Vagina (tissue), 2 donors: ENCODE measurements at regions of chr16 and their contacts with region 1.

Region 1: GRCh38 chr16:1610276-1611017 is 1.4 kb downstream of the IFT140 start:
- DNase-seq: peak in 1 of 2 donors; percentile 90
- H3K4me3 ChIP-seq: peak overlapping the region; percentile 93 to 99
- H3K27ac ChIP-seq: peak overlapping the region; percentile 78
- H3K4me1 ChIP-seq: peaks cover 39% of the 10 kb centered on the region
- H3K27me3 ChIP-seq: no peaks in the 10 kb centered on the region
- CTCF ChIP-seq: no peak
- POLR2A ChIP-seq: no peak

Region 2: DNA sequence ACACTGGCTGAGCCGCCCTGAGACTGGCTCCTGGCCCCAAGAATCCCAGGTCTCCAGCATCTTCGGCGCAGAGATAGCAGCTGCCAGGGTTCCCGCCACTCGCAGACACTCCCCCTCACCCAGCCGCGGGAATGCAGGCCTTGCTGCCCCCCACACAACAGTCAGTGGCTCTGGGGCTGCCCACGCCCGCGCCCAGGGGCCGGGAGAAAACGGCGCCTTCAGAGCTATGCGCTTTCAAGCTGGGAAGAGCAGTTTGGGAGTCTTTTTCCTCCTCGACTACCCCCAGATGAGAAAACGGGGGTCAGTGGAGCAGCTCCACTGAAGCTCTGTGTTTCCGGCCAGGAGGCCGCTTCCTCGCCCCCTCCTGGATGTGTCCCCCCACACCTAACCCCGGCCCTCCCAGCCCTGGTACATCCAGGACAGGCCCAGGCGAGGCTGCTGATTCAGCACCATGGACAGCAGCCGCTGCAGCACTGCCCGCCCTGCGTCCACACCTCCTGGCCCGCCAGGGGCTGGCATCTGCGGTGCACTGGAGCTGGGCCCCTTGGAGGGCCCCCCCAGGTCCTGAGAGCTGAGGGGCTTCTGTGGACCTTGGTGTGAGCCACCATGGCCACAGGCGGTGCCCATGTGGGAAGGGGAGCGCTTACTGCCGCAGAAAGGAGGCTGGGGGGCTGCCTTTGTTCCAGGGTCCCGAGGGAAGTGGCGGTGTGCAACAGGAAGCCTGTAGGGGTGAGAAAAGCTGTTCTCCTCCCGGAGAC is 421.8 kb before region 1 on chr16:
- intact Hi-C with region 1: no loop called
- DNase-seq: no peak
- H3K4me3 ChIP-seq: no peak overlapping the region
- H3K27ac ChIP-seq: no peak overlapping the region
- H3K4me1 ChIP-seq: peaks cover 2% of the 10 kb centered on the region
- H3K27me3 ChIP-seq: no peaks in the 10 kb centered on the region
- CTCF ChIP-seq: no peak
- POLR2A ChIP-seq: no peak

Region 3: GRCh38 chr16:1492923-1493745 is 117.3 kb before region 1 on chr16 and contains the start of gene TELO2:
- intact Hi-C with region 1: loop called (anchors 10 kb)
- DNase-seq: no peak
- H3K4me3 ChIP-seq: peak within 1 kb of the TSS; percentile 66 to 93
- H3K27ac ChIP-seq: peak within 1 kb of the TSS; percentile 63
- H3K4me1 ChIP-seq: peaks cover 25% of the 10 kb centered on the region
- H3K27me3 ChIP-seq: no peaks in the 10 kb centered on the region
- CTCF ChIP-seq: no peak
- POLR2A ChIP-seq: no peak
- total RNA-seq, gene TELO2: 23.8 TPM

Region 4: GRCh38 chr16:1533443-1533951 is 77.0 kb before region 1 on chr16 and contains the start of gene TMEM204:
- intact Hi-C with region 1: loop called (anchors 5 kb)
- DNase-seq: no peak
- H3K4me3 ChIP-seq: peak within 1 kb of the TSS; percentile 61 to 64
- H3K27ac ChIP-seq: peak within 1 kb of the TSS; percentile 91
- H3K4me1 ChIP-seq: peaks cover 85% of the 10 kb centered on the region
- H3K27me3 ChIP-seq: no peaks in the 10 kb centered on the region
- CTCF ChIP-seq: no peak
- POLR2A ChIP-seq: no peak
- total RNA-seq, gene TMEM204: 33.1 TPM

Region 5: DNA sequence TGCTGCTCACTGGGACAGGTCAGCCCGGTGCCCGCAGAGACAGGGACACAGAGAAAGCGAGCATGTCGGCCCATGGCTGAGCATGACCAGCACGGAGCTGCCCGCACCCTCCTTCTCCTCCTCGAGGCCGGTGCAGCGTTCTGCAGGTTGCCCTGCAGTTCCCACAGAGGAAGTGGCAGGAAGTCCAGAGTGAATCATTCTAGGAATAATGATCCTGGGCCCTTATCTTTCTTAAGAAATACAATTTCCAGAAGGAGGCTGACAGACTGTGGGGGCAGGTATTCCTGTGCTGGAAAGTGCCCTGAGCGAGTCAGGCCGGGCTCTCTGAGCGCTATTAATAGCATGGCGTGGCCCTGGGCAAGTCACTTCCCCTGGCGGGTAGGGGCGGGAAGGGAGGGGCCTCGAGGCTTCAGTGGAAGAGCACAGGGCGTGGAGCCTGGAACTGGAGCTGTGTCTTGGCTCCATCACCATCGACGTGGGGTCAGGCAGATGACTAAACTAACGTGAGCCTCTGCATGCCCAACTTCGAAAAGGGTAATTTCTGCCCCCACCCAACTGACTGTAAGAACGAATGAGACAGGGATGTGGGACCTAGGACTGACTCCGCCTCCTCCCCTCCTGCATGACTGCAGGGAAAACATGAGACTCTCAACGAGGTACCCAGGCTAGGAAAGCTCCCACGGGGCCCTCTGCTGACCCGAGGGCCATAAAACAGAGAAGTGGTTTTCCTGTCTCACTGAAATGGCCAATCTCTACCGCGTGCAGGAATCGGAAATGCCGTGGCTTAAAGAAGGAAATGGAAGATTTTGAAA is 67.2 kb before region 1 on chr16:
- intact Hi-C with region 1: loop called (anchors 5 kb)
- DNase-seq: no peak
- H3K4me3 ChIP-seq: no peak overlapping the region
- H3K27ac ChIP-seq: peak overlapping the region; percentile 56
- H3K4me1 ChIP-seq: peaks cover 77% of the 10 kb centered on the region
- H3K27me3 ChIP-seq: no peaks in the 10 kb centered on the region
- CTCF ChIP-seq: no peak
- POLR2A ChIP-seq: no peak

Region 6: GRCh38 chr16:1705688-1706385 is 95.4 kb after region 1 on chr16 and contains the start of gene MAPK8IP3:
- intact Hi-C with region 1: loop called (anchors 5 kb)
- DNase-seq: peak in 1 of 2 donors; percentile 91
- H3K4me3 ChIP-seq: peak within 1 kb of the TSS; percentile 76 to 94
- H3K27ac ChIP-seq: peak within 1 kb of the TSS; percentile 82
- H3K4me1 ChIP-seq: peaks cover 40% of the 10 kb centered on the region
- H3K27me3 ChIP-seq: no peaks in the 10 kb centered on the region
- CTCF ChIP-seq: peak; percentile 94 to 98 (median 95)
- POLR2A ChIP-seq: peak; percentile 22 to 90
- total RNA-seq, gene MAPK8IP3: 44.9 TPM

Region 7: GRCh38 chr16:1983544-1984346 is 373.3 kb after region 1 on chr16 and contains the start of gene GFER:
- intact Hi-C with region 1: no loop called
- DNase-seq: no peak
- H3K4me3 ChIP-seq: peak within 1 kb of the TSS; percentile 59 to 87
- H3K27ac ChIP-seq: peak within 1 kb of the TSS; percentile 53
- H3K4me1 ChIP-seq: peaks cover 30% of the 10 kb centered on the region
- H3K27me3 ChIP-seq: no peaks in the 10 kb centered on the region
- CTCF ChIP-seq: peak in 2 of 3 experiments; percentile 3 to 6
- POLR2A ChIP-seq: no peak
- total RNA-seq, gene GFER: 11.5 TPM